ENCODE measurements at regions of chr17 and their contacts with region 1.

Region 1: DNA sequence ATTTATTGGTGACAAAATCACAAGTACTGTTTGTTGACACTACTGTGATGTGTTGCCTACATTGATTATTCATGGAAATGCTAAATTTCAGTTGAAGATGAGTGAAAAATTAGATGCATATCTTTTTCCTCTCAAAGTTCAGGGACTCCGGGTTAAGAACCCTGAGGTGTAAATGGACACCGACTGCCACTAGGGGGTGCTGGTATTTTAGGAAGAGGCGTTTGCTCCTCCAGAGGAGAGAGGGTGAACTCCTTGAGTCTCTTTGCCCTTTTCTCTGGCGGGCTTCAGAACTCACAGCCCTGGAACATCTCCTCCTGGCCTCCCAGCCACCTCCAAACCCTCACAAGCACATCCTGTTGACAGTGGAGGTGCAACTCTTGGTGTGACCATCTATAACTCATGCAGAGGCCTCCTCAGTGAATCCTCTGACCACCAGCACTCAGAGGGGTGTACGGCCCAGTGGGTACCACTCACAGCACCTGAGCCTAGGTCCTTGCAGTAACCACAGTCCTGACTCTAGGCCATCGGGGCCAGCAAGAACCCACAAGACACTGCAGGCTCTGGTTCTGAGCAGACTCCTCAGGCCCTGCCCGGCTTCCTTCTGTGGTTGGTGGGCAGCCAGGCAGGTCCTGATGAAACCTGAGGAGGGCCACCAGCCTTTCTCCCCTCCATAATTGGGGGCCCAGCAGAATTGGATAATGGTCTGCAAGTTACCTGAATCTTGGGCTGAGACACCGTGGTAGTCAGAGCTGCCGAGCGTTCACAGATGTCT is 26.2 kb upstream of the PIK3R5 start:
- DNase-seq: peak; percentile 57
- ATAC-seq: peak; percentile 90
- H3K4me3 ChIP-seq: no peak overlapping the region
- H3K27ac ChIP-seq: no peak overlapping the region
- H3K4me1 ChIP-seq: no peaks in the 10 kb centered on the region
- H3K27me3 ChIP-seq: no peaks in the 10 kb centered on the region
- CTCF ChIP-seq: peak; percentile 70
- POLR2A ChIP-seq: no peak
- RAD21 ChIP-seq: peak; percentile 71

Region 2: GRCh38 chr17:9192010-9192409 is 200.3 kb after region 1 on chr17:
- CTCF ChIA-PET with region 1: no interaction called
- POLR2A ChIA-PET with region 1: no interaction called
- dilution Hi-C with region 1: no loop called
- in situ Hi-C with region 1: no loop called
- intact Hi-C with region 1: no loop called
- DNase-seq: peak; percentile 5
- ATAC-seq: peak; percentile 44; the same call in 1 of the 2 replicates
- H3K4me3 ChIP-seq: no peak overlapping the region
- H3K27ac ChIP-seq: no peak overlapping the region
- H3K4me1 ChIP-seq: no peaks in the 10 kb centered on the region
- H3K27me3 ChIP-seq: peaks cover 14% of the 10 kb centered on the region; the same call in 1 of the 2 replicates
- CTCF ChIP-seq: no peak
- POLR2A ChIP-seq: no peak
- RAD21 ChIP-seq: no peak

Region 3: DNA sequence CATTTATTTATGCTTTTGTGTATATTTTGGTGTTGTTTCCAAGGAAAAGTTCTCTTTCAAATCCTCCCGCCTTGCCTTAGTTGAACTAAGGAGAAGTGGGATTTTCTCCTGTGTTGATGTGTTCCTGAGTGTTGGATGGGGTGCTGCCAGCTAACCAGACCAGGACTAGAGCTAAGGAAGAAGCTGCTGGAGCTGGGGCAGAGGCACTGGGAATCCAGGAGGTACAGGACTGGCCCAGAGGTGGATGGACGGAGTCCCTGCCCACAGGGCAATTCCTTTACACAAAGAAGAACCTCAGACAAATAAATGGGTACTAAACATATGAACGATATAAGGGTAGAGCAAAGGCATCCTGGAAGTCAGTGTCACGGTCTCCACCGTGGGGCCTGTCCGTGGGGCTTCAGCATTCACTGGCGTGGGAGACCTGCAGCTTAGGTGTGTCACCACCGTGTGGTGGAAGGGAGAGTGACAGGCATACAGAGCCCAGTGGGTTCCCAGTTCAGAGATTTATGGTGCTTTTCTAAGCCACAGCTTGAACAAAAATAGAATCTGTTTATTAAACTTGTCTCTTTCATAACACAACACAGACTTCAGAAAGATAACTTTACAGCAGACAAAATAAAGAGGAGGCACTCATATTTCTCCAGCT is 300.3 kb after region 1 on chr17:
- CTCF ChIA-PET with region 1: no interaction called
- POLR2A ChIA-PET with region 1: no interaction called
- dilution Hi-C with region 1: no loop called
- in situ Hi-C with region 1: no loop called
- intact Hi-C with region 1: loop called (anchors 5 kb)
- DNase-seq: peak; percentile 25
- ATAC-seq: peak; percentile 95
- H3K4me3 ChIP-seq: no peak overlapping the region
- H3K27ac ChIP-seq: no peak overlapping the region
- H3K4me1 ChIP-seq: no peaks in the 10 kb centered on the region; the same call in 1 of the 2 replicates
- H3K27me3 ChIP-seq: no peaks in the 10 kb centered on the region
- CTCF ChIP-seq: peak; percentile 45
- POLR2A ChIP-seq: no peak
- RAD21 ChIP-seq: peak; percentile 58

Region 4: DNA sequence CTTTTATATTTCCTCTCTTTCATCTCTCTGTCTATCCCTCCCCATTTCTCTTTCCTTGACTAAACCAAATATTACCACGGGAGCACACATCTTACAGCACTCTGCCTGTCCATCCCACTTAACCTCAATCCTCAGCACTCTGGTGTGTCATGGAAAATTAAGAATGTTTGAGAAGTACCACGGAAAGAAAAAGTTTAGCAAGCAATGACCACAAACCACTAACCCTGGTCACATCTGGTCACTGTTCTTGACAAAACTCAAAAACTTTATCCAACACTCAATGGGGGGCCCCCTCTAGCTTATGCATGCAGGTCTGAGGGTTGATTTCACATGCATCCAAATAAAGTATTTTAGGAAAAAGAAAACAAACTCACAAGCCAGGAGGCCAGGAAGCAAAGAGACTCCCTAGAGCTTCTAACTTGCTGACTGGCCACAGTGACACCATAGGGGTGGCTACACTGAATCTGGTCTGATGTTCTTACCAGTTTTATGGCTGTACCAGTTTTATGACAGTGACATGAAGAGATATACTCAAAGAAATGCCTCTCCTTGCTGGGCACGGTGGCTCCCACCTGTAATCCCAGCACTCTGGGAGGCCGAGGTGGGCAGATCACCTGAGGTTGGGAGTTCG is 354.7 kb after region 1 on chr17:
- CTCF ChIA-PET with region 1: no interaction called
- POLR2A ChIA-PET with region 1: no interaction called
- dilution Hi-C with region 1: no loop called
- in situ Hi-C with region 1: no loop called
- intact Hi-C with region 1: loop called (anchors 10 kb)
- DNase-seq: peak; percentile 33
- ATAC-seq: no peak
- H3K4me3 ChIP-seq: no peak overlapping the region
- H3K27ac ChIP-seq: no peak overlapping the region
- H3K4me1 ChIP-seq: peaks cover 8% of the 10 kb centered on the region
- H3K27me3 ChIP-seq: no peaks in the 10 kb centered on the region
- CTCF ChIP-seq: no peak
- POLR2A ChIP-seq: no peak
- RAD21 ChIP-seq: no peak

Region 5: GRCh38 chr17:9432134-9432885 is 440.6 kb after region 1 on chr17:
- CTCF ChIA-PET with region 1: no interaction called
- POLR2A ChIA-PET with region 1: no interaction called
- dilution Hi-C with region 1: no loop called
- in situ Hi-C with region 1: no loop called
- intact Hi-C with region 1: loop called (anchors 10 kb)
- DNase-seq: peak; percentile 30
- ATAC-seq: peak; percentile 56; the same call in 1 of the 2 replicates
- H3K4me3 ChIP-seq: no peak overlapping the region
- H3K27ac ChIP-seq: no peak overlapping the region
- H3K4me1 ChIP-seq: no peaks in the 10 kb centered on the region
- H3K27me3 ChIP-seq: no peaks in the 10 kb centered on the region
- CTCF ChIP-seq: no peak
- POLR2A ChIP-seq: no peak
- RAD21 ChIP-seq: no peak

Region 6: GRCh38 chr17:9529033-9529700 is 537.5 kb after region 1 on chr17:
- CTCF ChIA-PET with region 1: no interaction called
- POLR2A ChIA-PET with region 1: no interaction called
- dilution Hi-C with region 1: no loop called
- in situ Hi-C with region 1: loop called (anchors 5 kb)
- intact Hi-C with region 1: loop called (anchors 1 kb)
- DNase-seq: peak; percentile 56
- ATAC-seq: peak; percentile 88
- H3K4me3 ChIP-seq: no peak overlapping the region
- H3K27ac ChIP-seq: no peak overlapping the region
- H3K4me1 ChIP-seq: no peaks in the 10 kb centered on the region
- H3K27me3 ChIP-seq: no peaks in the 10 kb centered on the region
- CTCF ChIP-seq: peak; percentile 74
- POLR2A ChIP-seq: no peak
- RAD21 ChIP-seq: peak; percentile 82

Region 7: GRCh38 chr17:9658593-9659211 is 667.0 kb after region 1 on chr17:
- CTCF ChIA-PET with region 1: no interaction called
- POLR2A ChIA-PET with region 1: no interaction called
- dilution Hi-C with region 1: no loop called
- in situ Hi-C with region 1: no loop called
- intact Hi-C with region 1: no loop called
- DNase-seq: no peak
- ATAC-seq: no peak
- H3K4me3 ChIP-seq: no peak overlapping the region
- H3K27ac ChIP-seq: no peak overlapping the region
- H3K4me1 ChIP-seq: no peaks in the 10 kb centered on the region
- H3K27me3 ChIP-seq: no peaks in the 10 kb centered on the region
- CTCF ChIP-seq: no peak
- POLR2A ChIP-seq: no peak
- RAD21 ChIP-seq: no peak

Measured in IMR-90 (cell line).